Sciatic nerve (tissue), 2 donors: ENCODE measurements at regions of chr14 and their contacts with region 1.

Region 1: DNA sequence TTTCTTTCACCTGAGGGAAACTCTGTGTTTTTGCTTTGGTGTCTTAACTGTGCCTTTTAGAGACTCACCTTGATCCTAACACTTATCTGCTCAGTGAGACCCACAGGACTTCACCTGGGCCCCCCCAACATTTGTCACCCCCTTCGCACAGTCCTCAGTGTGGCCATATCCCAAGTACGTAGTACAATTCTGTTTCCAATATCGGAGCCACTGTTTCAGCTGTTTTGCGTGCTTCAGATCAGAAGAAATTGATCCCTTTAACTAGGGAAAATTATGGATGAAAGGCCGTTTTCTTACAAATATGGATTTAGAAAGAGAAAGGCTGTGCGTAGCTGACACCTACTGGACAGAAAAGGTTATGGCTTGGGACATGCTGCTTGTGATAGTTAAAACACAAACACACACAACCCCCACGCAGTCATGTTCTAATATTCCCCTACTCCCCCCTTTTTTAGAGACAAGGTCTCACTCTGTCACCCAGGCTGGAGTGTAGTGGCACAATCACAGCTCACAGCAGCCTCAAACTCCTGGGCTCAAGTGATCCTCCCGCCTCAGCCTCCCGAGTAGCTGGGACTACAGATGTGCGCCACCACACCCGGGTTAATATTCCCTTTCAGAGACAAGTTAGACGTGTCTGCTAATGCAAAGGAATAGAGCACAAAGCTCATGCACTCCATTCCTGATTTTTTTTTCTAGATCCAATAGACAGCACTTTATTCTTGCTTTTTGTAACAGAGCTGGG is 3.6 kb upstream of the SLC7A8 start:
- DNase-seq: no peak
- ATAC-seq: peak; percentile 78

Region 2: DNA sequence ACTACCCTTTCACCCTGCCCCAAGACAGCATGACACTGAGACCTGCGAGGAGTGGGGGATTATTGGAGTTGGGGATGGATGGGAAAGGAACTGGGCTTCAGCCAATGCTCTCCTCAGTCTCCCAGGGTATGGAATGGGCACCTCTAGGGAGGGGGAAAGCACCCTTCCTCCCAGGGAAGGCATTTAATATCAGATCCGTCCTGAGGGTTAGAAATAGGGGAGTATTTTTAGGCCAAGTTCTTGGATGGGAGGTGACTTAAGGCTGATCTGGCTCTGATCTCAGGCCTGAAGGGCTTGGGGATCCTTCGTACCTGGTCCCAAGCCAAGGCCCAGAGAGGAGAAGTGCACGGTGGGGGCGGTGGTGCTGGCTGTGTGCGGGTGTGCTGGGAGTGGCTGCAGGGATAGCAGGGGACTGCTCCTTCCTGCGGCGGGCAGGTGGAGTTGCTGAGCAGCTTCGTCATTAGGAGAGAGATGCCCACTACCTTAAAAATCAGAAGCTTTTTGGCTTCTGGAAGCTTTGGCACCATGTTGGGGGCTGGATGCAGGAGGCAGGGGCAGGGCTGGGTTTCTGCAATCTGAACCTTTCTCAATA is 61.1 kb before region 1 on chr14:
- intact Hi-C with region 1: loop called (anchors 5 kb)
- DNase-seq: no peak
- ATAC-seq: peak; percentile 45